ENCODE measurements at regions of chr15 and their contacts with region 1.

Region 1: DNA sequence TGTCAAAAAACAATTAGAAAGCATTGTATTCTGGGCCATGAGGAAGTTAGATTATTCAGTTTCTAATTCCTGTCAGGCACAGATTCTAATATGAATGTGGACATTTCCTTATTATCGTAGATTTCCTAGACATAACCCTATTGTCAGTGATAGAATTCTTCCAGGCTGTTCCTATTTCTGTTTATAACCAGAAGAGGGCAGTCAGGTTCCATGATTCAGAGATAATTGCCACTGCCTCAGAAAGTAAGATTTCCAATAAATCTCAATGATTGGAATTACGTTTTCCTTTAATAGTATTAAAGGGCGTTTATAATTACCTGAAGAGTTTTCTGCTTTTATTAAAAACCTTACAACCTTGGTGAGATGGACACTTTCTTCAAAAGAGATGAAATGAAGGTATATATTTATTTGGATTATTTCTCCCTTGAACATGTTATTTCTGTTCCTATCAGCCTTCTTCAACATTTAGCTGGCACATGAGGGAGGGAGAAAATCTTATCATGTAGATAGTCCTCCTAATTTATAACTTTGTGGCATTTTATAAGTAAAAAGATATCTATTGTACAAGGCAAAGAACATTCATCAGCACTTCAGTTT is 439.2 kb downstream of the MCTP2 start:
- DNase-seq: peak; percentile 40
- H3K4me3 ChIP-seq: no peak overlapping the region
- H3K27ac ChIP-seq: no peak overlapping the region
- H3K4me1 ChIP-seq: peaks cover 16% of the 10 kb centered on the region
- H3K27me3 ChIP-seq: no peaks in the 10 kb centered on the region
- CTCF ChIP-seq: peak; percentile 68 to 69

Region 2: GRCh38 chr15:94412979-94413746 is 257.4 kb before region 1 on chr15:
- CTCF ChIA-PET with region 1: interaction called, 4 read pairs
- dilution Hi-C with region 1: no loop called
- in situ Hi-C with region 1: no loop called
- intact Hi-C with region 1: loop called (anchors 5 kb)
- DNase-seq: no peak
- H3K4me3 ChIP-seq: no peak overlapping the region
- H3K27ac ChIP-seq: no peak overlapping the region
- H3K4me1 ChIP-seq: no peaks in the 10 kb centered on the region
- H3K27me3 ChIP-seq: no peaks in the 10 kb centered on the region
- CTCF ChIP-seq: peak; percentile 37 to 46

Region 3: DNA sequence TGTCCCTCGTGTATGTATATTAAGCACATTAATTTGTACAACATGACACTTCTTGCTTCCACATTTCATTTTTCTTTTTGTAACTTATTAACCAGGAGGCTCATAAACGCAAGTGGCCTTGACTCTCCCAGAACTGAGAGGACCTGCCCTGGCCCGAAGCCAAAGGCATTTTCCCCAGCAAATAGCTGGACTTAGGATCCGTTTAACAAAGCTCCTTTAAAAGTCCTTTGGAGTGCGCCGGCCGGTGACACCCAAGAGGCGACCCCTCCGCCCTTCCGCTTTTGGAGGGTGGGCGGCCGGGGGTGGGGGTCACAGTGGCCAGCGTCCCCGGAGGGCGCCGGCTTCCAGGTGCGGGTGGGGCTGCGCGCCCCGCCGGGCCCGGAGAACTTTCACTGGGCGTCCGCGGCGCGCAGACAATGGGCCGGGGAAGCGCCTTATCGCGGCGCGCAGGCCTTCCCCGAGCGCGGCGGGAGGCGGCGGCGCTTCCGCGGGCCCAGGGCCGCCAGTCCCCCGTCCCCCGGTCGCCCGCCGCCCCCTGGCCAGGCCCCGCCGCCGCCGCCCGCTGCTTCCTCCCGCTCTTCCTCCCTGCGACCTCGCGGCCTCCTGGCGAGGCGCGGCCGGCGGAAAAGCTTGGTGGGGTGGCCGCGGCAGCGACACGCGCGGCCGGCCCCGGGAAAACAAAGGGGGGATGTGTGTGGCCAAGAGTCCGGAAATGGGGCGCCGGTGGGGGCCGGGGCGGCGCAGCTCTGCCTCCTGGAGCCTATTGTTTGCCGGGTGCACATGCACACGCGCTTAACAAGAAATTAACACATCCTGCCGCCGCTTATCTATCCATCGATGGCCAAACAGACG is 174.2 kb after region 1 on chr15:
- CTCF ChIA-PET with region 1: no interaction called
- dilution Hi-C with region 1: no loop called
- in situ Hi-C with region 1: no loop called
- intact Hi-C with region 1: loop called (anchors 5 kb)
- DNase-seq: no peak
- H3K4me3 ChIP-seq: peak overlapping the region in 1 of 3 experiments; percentile 30
- H3K27ac ChIP-seq: no peak overlapping the region
- H3K4me1 ChIP-seq: peaks cover 11% of the 10 kb centered on the region
- H3K27me3 ChIP-seq: no peaks in the 10 kb centered on the region
- CTCF ChIP-seq: peak in 1 of 2 donors; percentile 15

Region 4: DNA sequence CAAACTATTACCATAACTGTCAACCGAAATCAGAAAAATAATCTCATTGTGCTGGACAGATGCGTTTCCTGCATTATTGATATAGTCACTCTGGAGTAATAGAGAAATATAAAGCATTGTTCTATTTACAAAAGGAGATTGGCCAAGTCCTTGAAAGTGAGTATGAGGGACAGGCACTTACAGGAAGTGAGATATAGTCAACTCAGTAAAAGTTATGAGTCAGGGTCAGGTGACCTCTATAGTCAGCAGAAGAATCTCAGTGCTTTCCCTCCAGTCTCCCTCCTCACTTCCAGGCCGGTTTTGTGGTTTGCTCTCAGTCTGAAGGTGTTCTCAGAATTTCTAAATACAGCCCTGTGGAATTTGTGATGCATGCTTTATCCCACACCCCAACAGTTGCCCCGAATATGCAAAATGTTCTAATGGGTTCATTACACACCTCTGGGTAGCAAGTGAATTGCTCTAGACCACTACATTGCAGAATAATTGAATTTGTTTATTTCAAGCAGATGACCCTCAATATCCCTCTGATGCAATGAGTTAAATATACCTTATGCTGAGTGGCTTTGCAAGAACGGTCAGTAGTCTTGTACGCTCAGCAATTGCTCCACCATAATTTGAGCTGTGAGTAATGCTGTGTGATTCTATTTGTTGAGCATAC is 348.5 kb after region 1 on chr15:
- CTCF ChIA-PET with region 1: no interaction called
- dilution Hi-C with region 1: no loop called
- in situ Hi-C with region 1: loop called (anchors 10 kb)
- intact Hi-C with region 1: loop called (anchors 1 kb)
- DNase-seq: peak; percentile 90
- H3K4me3 ChIP-seq: no peak overlapping the region
- H3K27ac ChIP-seq: peak overlapping the region; percentile 44
- H3K4me1 ChIP-seq: peaks cover 28% of the 10 kb centered on the region
- H3K27me3 ChIP-seq: no peaks in the 10 kb centered on the region
- CTCF ChIP-seq: no peak

Region 5: GRCh38 chr15:95252404-95252803 is 581.9 kb after region 1 on chr15:
- CTCF ChIA-PET with region 1: no interaction called
- dilution Hi-C with region 1: no loop called
- in situ Hi-C with region 1: loop called in 1 of 2 experiments (anchors 25 kb)
- intact Hi-C with region 1: loop called (anchors 5 kb)
- DNase-seq: peak; percentile 45
- H3K4me3 ChIP-seq: no peak overlapping the region
- H3K27ac ChIP-seq: no peak overlapping the region
- H3K4me1 ChIP-seq: peaks cover 16% of the 10 kb centered on the region
- H3K27me3 ChIP-seq: no peaks in the 10 kb centered on the region
- CTCF ChIP-seq: peak in 1 of 2 donors; percentile 13

Region 6: DNA sequence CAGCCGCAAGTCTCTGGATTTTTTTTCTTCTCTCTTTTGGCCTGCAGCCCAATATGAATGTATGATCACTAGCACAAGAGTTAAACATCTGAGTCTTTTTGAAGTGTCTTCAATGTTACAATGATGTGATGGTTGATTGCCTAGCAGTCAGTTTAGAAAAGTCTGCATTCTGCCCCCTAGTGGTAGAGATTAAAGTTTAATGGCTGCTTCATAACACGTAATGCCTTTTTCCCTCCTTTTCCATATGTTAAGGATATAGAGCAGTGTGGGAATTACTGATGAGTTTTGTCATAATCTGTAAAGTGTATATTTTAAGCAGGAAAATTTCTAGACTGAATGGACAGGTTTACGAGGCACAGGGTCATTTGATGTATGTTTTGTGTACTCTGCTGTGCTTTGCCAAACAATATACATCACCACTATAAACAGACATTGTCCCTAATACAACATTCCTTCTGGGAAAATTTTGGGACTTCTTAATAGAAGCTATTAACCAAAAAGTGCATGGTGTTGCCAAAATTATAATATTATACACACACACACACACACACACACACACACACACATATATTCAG is 621.4 kb after region 1 on chr15:
- CTCF ChIA-PET with region 1: no interaction called
- dilution Hi-C with region 1: no loop called
- in situ Hi-C with region 1: loop called in 1 of 2 experiments (anchors 25 kb)
- intact Hi-C with region 1: loop called (anchors 2 kb)
- DNase-seq: peak; percentile 27
- H3K4me3 ChIP-seq: no peak overlapping the region
- H3K27ac ChIP-seq: no peak overlapping the region
- H3K4me1 ChIP-seq: peaks cover 5% of the 10 kb centered on the region
- H3K27me3 ChIP-seq: no peaks in the 10 kb centered on the region
- CTCF ChIP-seq: peak; percentile 65

Region 7: DNA sequence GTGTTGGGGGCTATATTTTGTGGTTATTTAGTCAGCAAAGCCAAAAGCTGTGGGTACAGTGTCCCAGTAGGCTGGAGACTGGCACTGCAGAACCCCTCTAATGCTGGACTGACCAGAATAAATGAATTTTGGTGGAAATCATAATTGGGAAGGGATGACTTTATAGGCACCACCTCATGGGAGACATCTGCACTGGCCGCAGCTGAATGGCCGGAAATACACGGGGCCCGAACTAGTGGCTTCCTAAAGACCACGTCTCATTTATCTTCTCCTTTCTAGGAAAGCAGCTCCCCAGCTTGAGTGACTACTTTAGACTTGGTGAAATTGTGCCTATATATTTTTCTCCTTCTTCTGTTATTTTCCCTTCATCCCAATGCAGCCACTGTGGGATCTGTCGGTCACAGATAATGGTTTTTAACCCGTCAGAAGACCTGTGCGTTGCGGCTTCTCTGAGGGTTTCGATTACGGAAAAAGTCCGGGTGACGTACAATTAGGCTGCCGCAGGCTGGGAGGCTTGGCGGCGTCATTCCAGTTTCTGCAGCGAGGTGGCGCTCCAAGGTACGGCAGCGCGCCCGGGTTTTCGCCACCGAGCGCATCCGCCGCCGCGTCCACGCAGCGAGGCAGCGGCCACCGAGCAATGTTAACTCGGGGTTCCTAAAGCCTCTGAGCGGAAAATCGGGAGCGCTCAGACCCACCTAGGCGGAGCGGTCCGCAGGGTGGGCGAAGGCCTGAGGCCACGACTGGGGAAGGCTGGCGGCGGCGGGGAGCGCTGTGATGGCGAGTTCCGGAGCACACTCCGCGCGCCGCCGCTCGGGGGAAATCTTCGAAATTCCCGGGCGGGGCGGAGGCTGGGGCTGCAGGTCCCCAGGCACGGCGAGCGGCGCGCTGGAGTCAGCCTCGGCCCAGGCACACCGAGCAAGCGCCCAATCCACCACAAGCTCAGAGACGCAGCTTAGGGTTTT is 1686.2 kb after region 1 on chr15:
- CTCF ChIA-PET with region 1: no interaction called
- dilution Hi-C with region 1: no loop called
- in situ Hi-C with region 1: no loop called
- intact Hi-C with region 1: loop called (anchors 5 kb)
- DNase-seq: peak; percentile 86
- H3K4me3 ChIP-seq: peak overlapping the region; percentile 61 to 78 (median 73)
- H3K27ac ChIP-seq: peak overlapping the region; percentile 66
- H3K4me1 ChIP-seq: peaks cover 23% of the 10 kb centered on the region
- H3K27me3 ChIP-seq: peaks cover 21% of the 10 kb centered on the region
- CTCF ChIP-seq: peak; percentile 66 to 89

Measured in mammary epithelial cell (primary cell).